Lower leg skin (tissue), 4 donors: ENCODE measurements at regions of chr14 and their contacts with region 1.

Region 1: DNA sequence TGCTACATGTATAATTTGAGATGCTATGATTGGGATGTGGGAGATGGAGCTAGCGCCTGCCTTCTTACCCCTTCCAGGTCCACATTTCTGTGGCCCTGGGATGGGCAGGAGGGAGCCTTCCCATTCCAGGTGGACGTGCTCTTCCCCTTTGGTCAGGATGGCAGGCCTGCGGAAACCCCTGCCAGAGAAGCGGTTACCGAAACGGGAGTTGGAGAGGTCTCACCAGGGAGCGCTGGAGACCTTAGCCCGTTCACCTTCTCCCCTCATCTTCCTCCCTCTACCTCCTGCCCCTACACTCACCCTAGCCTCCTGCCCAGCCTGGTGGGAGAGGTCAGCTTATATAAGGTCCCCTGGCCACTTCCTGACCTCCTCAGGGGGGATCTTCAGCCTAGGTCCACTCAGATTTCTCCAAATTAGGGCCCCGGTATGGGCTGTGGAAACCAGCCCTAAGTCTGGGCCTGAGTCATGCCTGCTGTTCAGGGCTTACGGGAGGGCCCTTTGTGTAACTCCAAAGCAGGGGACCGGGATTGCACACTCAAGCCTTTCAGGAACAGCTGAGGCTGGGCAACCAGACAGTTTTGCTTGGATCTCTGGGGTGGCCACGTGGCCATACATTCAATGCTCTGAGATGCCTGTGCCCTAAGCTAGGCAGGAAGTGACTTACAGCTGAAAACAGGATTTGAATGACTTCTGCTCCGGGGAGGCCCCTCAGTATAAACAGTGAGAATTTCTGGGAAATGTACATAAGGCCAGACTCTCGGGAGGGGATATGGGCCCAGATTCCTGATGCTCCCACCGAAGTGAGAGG is 10.2 kb upstream of the MEG3 start:
- DNase-seq: no peak
- H3K4me3 ChIP-seq: no peak overlapping the region
- CTCF ChIP-seq: no peak
- POLR2A ChIP-seq: no peak

Region 2: DNA sequence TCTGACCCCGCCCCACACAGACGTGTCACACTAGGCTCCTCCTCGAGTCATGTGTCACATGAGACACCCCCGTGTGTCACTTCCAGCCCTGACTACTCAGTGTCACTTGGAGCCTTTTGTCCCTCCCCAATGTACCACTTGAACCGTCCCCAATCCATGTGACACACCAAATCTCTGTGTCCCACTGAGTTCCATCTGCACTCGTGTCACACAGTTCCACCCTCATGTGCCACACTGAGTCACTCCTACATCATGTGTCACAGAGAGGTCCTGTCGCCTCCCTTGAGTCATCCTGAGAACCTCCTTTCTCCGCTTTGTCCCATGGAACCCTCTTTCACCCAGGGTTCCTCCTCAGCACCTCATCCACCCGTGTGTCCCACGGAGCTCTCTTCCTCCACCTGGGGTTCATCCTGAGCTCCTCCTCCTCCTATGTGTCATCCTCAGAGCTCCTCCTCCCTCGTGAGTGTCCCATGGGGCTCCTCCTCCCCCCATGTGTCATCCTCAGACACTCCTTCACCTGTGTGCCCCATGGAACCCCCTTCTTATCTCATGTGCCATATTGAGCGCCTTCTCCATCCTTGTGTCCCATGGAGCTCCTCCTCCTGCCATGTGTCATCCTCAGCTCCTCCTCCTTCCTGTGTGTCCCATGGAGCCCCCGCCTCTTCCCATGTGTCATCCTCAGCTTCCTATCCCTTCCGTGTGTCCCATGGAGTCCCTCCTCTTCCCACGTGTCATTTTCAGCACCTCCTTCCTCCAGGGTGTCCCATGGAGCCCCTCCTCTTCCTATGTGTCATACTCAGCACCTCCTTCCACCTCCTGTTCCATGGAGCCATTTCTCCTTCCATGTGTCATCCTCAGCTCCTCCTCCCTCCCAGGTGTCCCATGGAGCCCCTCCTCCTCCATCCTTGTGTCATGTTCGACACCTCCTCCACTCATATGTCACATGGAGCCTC is 55.8 kb after region 1 on chr14:
- intact Hi-C with region 1: loop called (anchors 2 kb)
- DNase-seq: peak in 1 of 2 donors; percentile 73
- H3K4me3 ChIP-seq: no peak overlapping the region
- CTCF ChIP-seq: no peak
- POLR2A ChIP-seq: no peak

Region 3: GRCh38 chr14:101635749-101636560 is 820.3 kb after region 1 on chr14:
- intact Hi-C with region 1: loop called (anchors 10 kb)
- DNase-seq: peak in 1 of 2 donors; percentile 72
- H3K4me3 ChIP-seq: no peak overlapping the region
- CTCF ChIP-seq: no peak
- POLR2A ChIP-seq: no peak